ENCODE measurements at regions of chr16 and their contacts with region 1.

Region 1: GRCh38 chr16:23595951-23596720 is at the start of gene NDUFAB1:
- DNase-seq: peak; percentile 99
- H3K4me3 ChIP-seq: peak within 1 kb of the TSS; percentile 89 to 99 (median 95)
- H3K27ac ChIP-seq: peak within 1 kb of the TSS; percentile 59 to 88 (median 85)
- H3K4me1 ChIP-seq: peaks cover 15 to 61% (median 37%) of the 10 kb centered on the region in 6 donors
- H3K27me3 ChIP-seq: no peaks in the 10 kb centered on the region
- CTCF ChIP-seq: peak; percentile 99 to 100 (median 100)
- POLR2A ChIP-seq: peak in 1 of 3 donors; percentile 9
- total RNA-seq, gene NDUFAB1: 40.1 to 91.0 (median 49.0) TPM

Region 2: GRCh38 chr16:23556881-23557778 is 39.0 kb before region 1 on chr16 and contains the starts of genes EARS2 and UBFD1:
- intact Hi-C with region 1: loop called (anchors 5 kb)
- DNase-seq: peak; percentile 99
- H3K4me3 ChIP-seq: peak within 1 kb of the TSS; percentile 85 to 100 (median 94)
- H3K27ac ChIP-seq: peak within 1 kb of the TSS; percentile 80 to 93 (median 90)
- H3K4me1 ChIP-seq: peaks cover 20 to 59% (median 41%) of the 10 kb centered on the region in 6 donors
- H3K27me3 ChIP-seq: no peaks in the 10 kb centered on the region
- CTCF ChIP-seq: peak; percentile 97 to 100 (median 99)
- POLR2A ChIP-seq: no peak
- total RNA-seq, gene EARS2: 10.7 to 21.8 (median 19.3) TPM
- total RNA-seq, gene UBFD1: 39.0 to 63.7 (median 43.4) TPM

Region 3: DNA sequence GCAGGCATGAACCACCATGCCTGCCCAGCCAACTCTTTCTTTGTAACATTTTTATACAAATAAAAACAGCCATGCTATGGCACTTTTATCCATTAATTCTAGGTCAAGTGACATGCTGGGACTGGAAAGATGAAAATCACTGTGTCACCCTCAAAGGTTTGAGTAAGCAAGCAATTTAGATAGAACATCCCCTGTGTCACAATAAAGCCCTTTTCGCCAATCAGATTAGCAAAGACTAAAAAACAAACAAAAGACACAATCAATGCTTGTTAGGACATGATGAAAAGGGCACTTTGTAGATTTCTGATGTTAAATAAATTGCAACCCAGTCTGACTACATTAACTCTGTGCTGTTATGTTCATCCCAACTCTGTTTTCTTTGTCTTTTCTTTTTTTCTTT is 185.0 kb after region 1 on chr16:
- intact Hi-C with region 1: no loop called
- DNase-seq: no peak
- H3K4me3 ChIP-seq: no peak overlapping the region
- H3K27ac ChIP-seq: no peak overlapping the region
- H3K4me1 ChIP-seq: no peaks in the 10 kb centered on the region
- H3K27me3 ChIP-seq: peaks cover 0 to 68% (median 0%) of the 10 kb centered on the region in 7 donors
- CTCF ChIP-seq: no peak
- POLR2A ChIP-seq: no peak

Region 4: GRCh38 chr16:23952128-23952970 is 356.2 kb after region 1 on chr16:
- intact Hi-C with region 1: no loop called
- DNase-seq: no peak
- H3K4me3 ChIP-seq: no peak overlapping the region
- H3K27ac ChIP-seq: peak overlapping the region in 6 of 8 donors; percentile 10 to 77 (median 50)
- H3K4me1 ChIP-seq: peaks cover 31 to 99% (median 70%) of the 10 kb centered on the region in 6 donors
- H3K27me3 ChIP-seq: no peaks in the 10 kb centered on the region
- CTCF ChIP-seq: no peak
- POLR2A ChIP-seq: no peak

Measured in spleen (tissue), 13 donors.